Colonic mucosa (tissue), 4 donors: ENCODE measurements at regions of chr18 and their contacts with region 1.

Region 1: GRCh38 chr18:52903857-52904256 is 563.9 kb downstream of the DCC start:
- DNase-seq: peak; percentile 57
- H3K4me3 ChIP-seq: no peak overlapping the region
- H3K27ac ChIP-seq: no peak overlapping the region
- H3K4me1 ChIP-seq: no peaks in the 10 kb centered on the region
- H3K27me3 ChIP-seq: no peaks in the 10 kb centered on the region
- CTCF ChIP-seq: peak; percentile 64

Region 2: DNA sequence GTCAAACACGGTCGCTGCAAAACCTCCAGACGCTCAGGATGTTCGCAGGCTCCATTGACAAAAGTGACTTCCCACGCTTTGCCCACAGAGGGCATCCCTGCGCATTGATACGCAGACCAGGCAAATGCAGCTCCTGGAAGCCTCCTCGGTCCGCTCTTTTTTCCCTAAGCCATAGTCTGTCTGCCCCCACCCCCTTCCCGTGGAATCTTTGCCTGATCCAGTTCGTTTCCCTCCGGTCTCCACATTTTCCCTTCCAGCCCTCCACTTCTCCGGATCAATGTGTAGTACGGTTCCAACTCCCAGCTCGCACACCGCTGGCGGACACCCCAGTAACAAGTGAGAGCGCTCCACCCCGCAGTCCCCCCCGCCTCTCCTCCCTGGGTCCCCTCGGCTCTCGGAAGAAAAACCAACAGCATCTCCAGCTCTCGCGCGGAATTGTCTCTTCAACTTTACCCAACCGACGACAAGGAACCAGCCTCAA is 563.9 kb before region 1 on chr18 and contains the start of gene DCC:
- intact Hi-C with region 1: loop called (anchors 10 kb)
- DNase-seq: peak; percentile 24
- H3K4me3 ChIP-seq: no peak within 1 kb of the TSS
- H3K27ac ChIP-seq: no peak within 1 kb of the TSS
- H3K4me1 ChIP-seq: no peaks in the 10 kb centered on the region
- H3K27me3 ChIP-seq: peaks cover 21% of the 10 kb centered on the region
- CTCF ChIP-seq: no peak
- total RNA-seq, gene DCC: 0.10 to 0.48 TPM

Region 3: DNA sequence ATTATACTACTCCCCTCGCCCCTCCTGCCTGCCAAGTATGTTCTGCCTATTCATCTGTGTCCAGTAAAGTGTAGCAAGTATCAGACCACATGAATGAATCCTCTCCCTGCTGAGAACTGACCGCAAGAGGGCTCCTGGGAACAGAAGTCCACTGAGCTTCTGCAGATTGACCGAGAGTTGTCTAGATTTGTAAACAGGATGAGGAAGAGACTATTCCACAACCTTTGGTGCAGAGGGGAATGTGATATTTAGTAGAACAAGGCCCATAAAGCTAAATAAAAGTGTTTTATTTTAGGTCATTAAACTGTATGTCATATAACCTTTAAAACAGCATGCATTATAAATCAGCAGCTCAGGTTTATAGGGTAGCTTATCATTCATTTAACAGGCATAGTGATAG is 186.9 kb before region 1 on chr18:
- intact Hi-C with region 1: loop called (anchors 5 kb)
- DNase-seq: peak; percentile 54
- H3K4me3 ChIP-seq: no peak overlapping the region
- H3K27ac ChIP-seq: no peak overlapping the region
- H3K4me1 ChIP-seq: no peaks in the 10 kb centered on the region
- H3K27me3 ChIP-seq: no peaks in the 10 kb centered on the region
- CTCF ChIP-seq: peak; percentile 36